Heart left ventricle (tissue), 16 donors: ENCODE measurements at regions of chr17 and their contacts with region 1.

Region 1: GRCh38 chr17:34306466-34306865 is 12.8 kb upstream of the CCL8 start:
- DNase-seq: no peak
- ATAC-seq: peak in 3 of 4 donors; percentile 82 to 89 (median 86)
- H3K4me3 ChIP-seq: no peak overlapping the region
- H3K27ac ChIP-seq: peak overlapping the region in 5 of 12 donors; percentile 10 to 72 (median 25)
- H3K4me1 ChIP-seq: peaks cover 0 to 56% (median 21%) of the 10 kb centered on the region in 12 donors
- H3K27me3 ChIP-seq: no peaks in the 10 kb centered on the region
- CTCF ChIP-seq: peak in 11 of 12 donors; percentile 37 to 67 (median 55)
- POLR2A ChIP-seq: no peak

Region 2: DNA sequence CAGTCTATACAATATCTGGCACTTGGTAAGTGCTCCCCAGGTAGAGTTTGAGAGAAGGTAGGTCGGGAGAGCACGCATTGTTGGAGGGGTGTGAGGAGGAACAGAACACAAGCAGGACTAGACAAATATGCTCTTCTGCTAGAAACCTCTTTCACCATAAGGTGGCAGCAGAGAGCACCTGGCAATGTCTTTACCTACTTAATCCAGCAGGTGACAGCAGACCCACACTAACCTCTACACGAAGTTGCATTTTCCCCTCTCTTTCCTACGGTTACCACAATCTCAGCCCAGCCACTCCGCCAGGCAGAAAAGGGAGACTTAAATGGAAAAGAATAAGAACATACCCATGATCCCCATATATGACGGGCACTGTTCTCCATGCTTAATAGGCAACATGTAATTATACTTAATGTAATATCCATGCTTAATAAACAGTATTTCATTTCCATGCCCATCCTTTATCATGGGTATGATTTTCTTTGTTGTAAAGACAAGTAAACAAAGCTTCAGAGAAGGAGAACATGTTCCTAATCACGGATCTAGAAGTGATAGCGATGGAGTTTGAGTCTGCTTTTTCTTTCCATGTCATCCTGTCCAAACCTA is 106.4 kb before region 1 on chr17:
- intact Hi-C with region 1: loop called (anchors 1 to 2 kb)
- DNase-seq: peak in 4 of 5 donors; percentile 63 to 79 (median 71)
- ATAC-seq: peak; percentile 81 to 94 (median 92)
- H3K4me3 ChIP-seq: no peak overlapping the region
- H3K27ac ChIP-seq: peak overlapping the region in 2 of 12 donors; percentile 30 to 57
- H3K4me1 ChIP-seq: peaks cover 0 to 32% (median under 1%) of the 10 kb centered on the region in 12 donors
- H3K27me3 ChIP-seq: peaks cover 0 to 17% (median 0%) of the 10 kb centered on the region in 9 donors
- CTCF ChIP-seq: peak; percentile 99 to 100 (median 100)
- POLR2A ChIP-seq: no peak

Region 3: DNA sequence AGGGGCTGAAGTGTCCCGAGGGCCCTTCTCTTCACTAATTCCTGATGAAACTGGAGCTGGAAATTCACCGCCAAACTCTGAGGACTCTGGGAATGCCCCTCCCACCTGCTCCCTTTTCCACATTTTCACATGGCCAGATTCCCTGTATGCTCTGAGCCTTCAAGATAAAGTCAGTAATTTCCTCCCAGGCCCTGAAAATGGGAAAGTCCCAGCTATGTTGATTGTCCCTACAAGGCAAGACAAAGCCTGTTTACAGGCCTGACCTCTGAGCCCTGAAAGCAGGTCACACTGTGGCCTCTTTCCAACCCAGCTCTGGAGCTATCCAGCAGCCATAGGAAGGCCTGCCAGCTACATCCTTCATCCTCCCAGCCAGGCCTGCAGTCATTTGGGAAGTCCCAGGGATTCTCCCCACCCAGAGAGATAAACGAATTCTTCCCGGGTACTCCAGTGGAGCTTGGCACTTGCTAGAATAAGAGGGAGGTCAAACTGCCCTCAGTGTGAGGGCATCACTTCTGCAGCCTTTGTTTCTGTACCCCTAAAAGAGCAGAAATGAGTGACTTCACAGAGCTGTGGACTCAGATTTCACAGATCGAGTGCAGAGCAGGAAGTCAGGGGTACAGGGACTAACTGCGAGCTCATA is 71.0 kb before region 1 on chr17:
- intact Hi-C with region 1: loop called in 2 of 10 experiments (anchors 5 to 10 kb)
- DNase-seq: peak; percentile 78 to 88 (median 85)
- ATAC-seq: peak; percentile 58 to 95 (median 82)
- H3K4me3 ChIP-seq: no peak overlapping the region
- H3K27ac ChIP-seq: peak overlapping the region in 11 of 12 donors; percentile 61 to 87 (median 83)
- H3K4me1 ChIP-seq: peaks cover 6 to 74% (median 64%) of the 10 kb centered on the region in 12 donors
- H3K27me3 ChIP-seq: no peaks in the 10 kb centered on the region
- CTCF ChIP-seq: no peak
- POLR2A ChIP-seq: no peak

Region 4: GRCh38 chr17:34347063-34347462 is 40.6 kb after region 1 on chr17:
- intact Hi-C with region 1: no loop called
- DNase-seq: no peak
- ATAC-seq: no peak
- H3K4me3 ChIP-seq: no peak overlapping the region
- H3K27ac ChIP-seq: no peak overlapping the region
- H3K4me1 ChIP-seq: no peaks in the 10 kb centered on the region
- H3K27me3 ChIP-seq: peaks cover 0 to 5% (median 0%) of the 10 kb centered on the region in 9 donors
- CTCF ChIP-seq: no peak
- POLR2A ChIP-seq: no peak

Region 5: GRCh38 chr17:34370997-34371395 is 64.5 kb after region 1 on chr17:
- intact Hi-C with region 1: no loop called
- DNase-seq: no peak
- ATAC-seq: no peak
- H3K4me3 ChIP-seq: no peak overlapping the region
- H3K27ac ChIP-seq: no peak overlapping the region
- H3K4me1 ChIP-seq: peaks cover 0 to 54% (median 0%) of the 10 kb centered on the region in 12 donors
- H3K27me3 ChIP-seq: peaks cover 0 to 13% (median 0%) of the 10 kb centered on the region in 9 donors
- CTCF ChIP-seq: no peak
- POLR2A ChIP-seq: no peak

Region 6: GRCh38 chr17:35641032-35641431 is 1334.6 kb after region 1 on chr17:
- intact Hi-C with region 1: no loop called
- DNase-seq: no peak
- ATAC-seq: no peak
- H3K4me3 ChIP-seq: no peak overlapping the region
- H3K27ac ChIP-seq: no peak overlapping the region
- H3K4me1 ChIP-seq: no peaks in the 10 kb centered on the region
- H3K27me3 ChIP-seq: no peaks in the 10 kb centered on the region
- CTCF ChIP-seq: no peak
- POLR2A ChIP-seq: no peak